ENCODE measurements at regions of chr11 and their contacts with region 1.

Region 1: GRCh38 chr11:45771566-45772448 is 33.1 kb upstream of the SLC35C1 start:
- ATAC-seq: peak; percentile 85 to 98 (median 96)
- H3K4me3 ChIP-seq: peak overlapping the region; percentile 23 to 37 (median 32)
- H3K27ac ChIP-seq: no peak overlapping the region
- H3K4me1 ChIP-seq: peaks cover 3 to 7% of the 10 kb centered on the region in 2 donors

Region 2: GRCh38 chr11:45365961-45366618 is 405.7 kb before region 1 on chr11:
- in situ Hi-C with region 1: loop called in 7 of 9 experiments (anchors 10 to 25 kb)
- ATAC-seq: peak in 3 of 8 experiments; percentile 12 to 25 (median 21)
- H3K4me3 ChIP-seq: no peak overlapping the region
- H3K27ac ChIP-seq: peak overlapping the region in 1 of 2 donors; percentile 9
- H3K4me1 ChIP-seq: peaks cover 22 to 23% of the 10 kb centered on the region in 2 donors

Region 3: DNA sequence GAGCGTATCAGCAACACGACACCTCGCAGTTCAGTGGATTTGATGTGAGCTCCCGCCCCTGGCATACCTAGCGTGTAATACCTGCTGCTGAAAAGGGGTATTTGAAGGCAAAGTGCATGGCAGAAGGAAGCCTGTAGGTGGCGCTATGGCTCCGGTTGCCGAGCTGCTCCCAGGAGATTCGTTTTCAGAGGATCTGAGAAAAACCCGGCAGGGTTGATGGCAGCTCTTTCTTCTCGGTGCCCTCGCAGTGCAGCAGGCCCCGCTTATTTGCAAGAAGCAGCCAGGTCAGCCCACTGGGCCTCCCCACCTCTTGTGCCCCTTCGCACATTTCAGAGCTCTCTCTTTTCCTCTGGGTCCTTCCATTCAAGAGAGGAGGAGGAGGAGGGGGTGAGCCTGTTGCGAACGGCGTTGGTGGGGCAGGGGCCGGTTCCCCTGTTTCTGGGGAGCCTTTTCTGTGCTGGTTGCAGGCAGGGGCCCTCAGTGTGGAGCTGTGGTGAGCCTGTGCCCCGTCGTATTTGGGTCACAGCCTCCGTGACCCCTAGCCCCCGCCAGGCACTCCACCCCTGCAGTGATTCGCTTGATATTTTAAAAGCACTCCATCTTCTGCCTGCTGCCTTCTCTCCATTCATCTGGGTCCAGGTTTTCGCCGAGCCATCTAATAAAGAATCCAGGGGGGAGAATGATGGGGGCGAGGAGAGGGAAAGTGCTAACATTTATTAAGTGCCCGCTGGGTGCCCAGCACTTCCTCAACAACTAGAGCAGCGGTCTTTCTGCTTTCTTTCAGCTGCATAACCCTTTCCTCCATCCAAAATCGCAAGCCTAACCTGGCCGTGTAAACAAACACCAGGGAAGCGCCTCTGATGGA is 400.3 kb before region 1 on chr11:
- in situ Hi-C with region 1: loop called in 8 of 9 experiments (anchors 10 to 25 kb)
- ATAC-seq: peak; percentile 78 to 97 (median 85)
- H3K4me3 ChIP-seq: peak overlapping the region in 3 of 5 donors; percentile 6 to 8 (median 7)
- H3K27ac ChIP-seq: peak overlapping the region; percentile 40 to 75
- H3K4me1 ChIP-seq: peaks cover 35 to 40% of the 10 kb centered on the region in 2 donors

Region 4: GRCh38 chr11:45383224-45383623 is 388.6 kb before region 1 on chr11:
- in situ Hi-C with region 1: loop called in 1 of 9 experiments (anchors 25 kb)
- ATAC-seq: no peak
- H3K4me3 ChIP-seq: no peak overlapping the region
- H3K27ac ChIP-seq: no peak overlapping the region
- H3K4me1 ChIP-seq: peaks cover 23 to 26% of the 10 kb centered on the region in 2 donors